Naive thymus-derived CD4-positive, alpha-beta T cell (primary cell): ENCODE measurements at regions of chr9 and their contacts with region 1.

Region 1: DNA sequence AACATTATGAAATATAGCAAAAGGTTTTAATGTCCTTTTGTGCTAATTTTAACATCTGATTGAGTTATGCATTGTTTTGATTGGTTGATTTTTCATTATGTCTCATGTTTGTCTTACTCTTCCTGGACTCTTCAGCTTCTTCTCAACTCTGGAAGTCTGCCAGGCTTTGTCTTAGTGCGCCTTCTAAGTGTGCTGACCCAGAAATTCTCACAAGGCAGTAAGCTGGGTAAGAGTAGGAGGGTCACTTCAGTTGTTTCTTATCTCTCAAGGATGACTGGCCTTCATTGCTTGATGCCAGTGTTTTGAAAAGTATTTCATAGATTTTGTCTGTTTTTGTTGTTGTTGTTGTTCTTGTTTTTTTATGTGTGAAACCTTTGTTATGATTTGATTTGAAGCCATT is 59.2 kb downstream of the RIC1 start:
- DNase-seq: no peak
- ATAC-seq: no peak
- H3K4me3 ChIP-seq: no peak overlapping the region
- H3K4me3 Mint-ChIP-seq: peak overlapping the region in 1 of 10 donors; percentile 7
- H3K27ac ChIP-seq: no peak overlapping the region
- H3K27ac Mint-ChIP-seq: peak overlapping the region in 2 of 9 donors; percentile 3 to 50
- H3K4me1 ChIP-seq: no peaks in the 10 kb centered on the region
- H3K4me1 Mint-ChIP-seq: peaks cover 0 to 30% (median 24%) of the 10 kb centered on the region in 7 donors
- H3K27me3 ChIP-seq: no peaks in the 10 kb centered on the region
- H3K27me3 Mint-ChIP-seq: no peaks in the 10 kb centered on the region

Region 2: GRCh38 chr9:5671711-5672353 is 16.3 kb before region 1 on chr9:
- CTCF ChIA-PET with region 1: no interaction called
- POLR2A ChIA-PET with region 1: no interaction called
- intact Hi-C with region 1: loop called in 1 of 2 experiments (anchors 2 kb)
- DNase-seq: peak in 7 of 9 donors; percentile 45 to 65 (median 52)
- ATAC-seq: peak; percentile 85
- H3K4me3 ChIP-seq: no peak overlapping the region
- H3K4me3 Mint-ChIP-seq: peak overlapping the region; percentile 3 to 62 (median 33)
- H3K27ac ChIP-seq: peak overlapping the region; percentile 1
- H3K27ac Mint-ChIP-seq: peak overlapping the region; percentile 3 to 87 (median 17)
- H3K4me1 ChIP-seq: peaks cover 5 to 19% of the 10 kb centered on the region in 2 donors
- H3K4me1 Mint-ChIP-seq: peaks cover 29 to 64% (median 57%) of the 10 kb centered on the region in 7 donors
- H3K27me3 ChIP-seq: no peaks in the 10 kb centered on the region
- H3K27me3 Mint-ChIP-seq: no peaks in the 10 kb centered on the region

Region 3: DNA sequence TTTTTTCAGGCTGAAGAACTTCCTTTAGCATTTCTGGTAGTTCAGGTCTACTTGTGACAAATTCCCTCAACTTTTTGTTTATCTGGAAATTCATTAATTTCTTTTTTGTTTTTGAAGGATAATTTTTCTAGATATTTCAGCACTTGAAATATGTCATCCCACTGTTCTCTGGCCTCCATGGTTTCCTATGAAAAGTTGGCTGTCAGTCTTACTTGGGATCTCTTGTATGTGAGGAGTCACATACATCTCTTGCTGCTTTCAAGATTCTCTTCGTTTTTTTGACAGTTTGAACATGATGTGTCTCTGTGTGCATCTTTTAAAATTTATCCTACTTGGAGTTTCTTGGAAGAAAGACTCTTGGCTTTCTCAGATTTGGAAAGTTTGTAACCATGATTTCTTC is 20.3 kb after region 1 on chr9:
- CTCF ChIA-PET with region 1: no interaction called
- POLR2A ChIA-PET with region 1: no interaction called
- intact Hi-C with region 1: loop called in 1 of 2 experiments (anchors 2 kb)
- DNase-seq: no peak
- ATAC-seq: no peak
- H3K4me3 ChIP-seq: no peak overlapping the region
- H3K4me3 Mint-ChIP-seq: no peak overlapping the region
- H3K27ac ChIP-seq: no peak overlapping the region
- H3K27ac Mint-ChIP-seq: no peak overlapping the region
- H3K4me1 ChIP-seq: no peaks in the 10 kb centered on the region
- H3K4me1 Mint-ChIP-seq: peaks cover 0 to 10% (median 2%) of the 10 kb centered on the region in 7 donors
- H3K27me3 ChIP-seq: no peaks in the 10 kb centered on the region
- H3K27me3 Mint-ChIP-seq: no peaks in the 10 kb centered on the region

Region 4: GRCh38 chr9:5817869-5818268 is 129.8 kb after region 1 on chr9:
- CTCF ChIA-PET with region 1: no interaction called
- POLR2A ChIA-PET with region 1: no interaction called
- intact Hi-C with region 1: no loop called
- DNase-seq: no peak
- ATAC-seq: no peak
- H3K4me3 ChIP-seq: no peak overlapping the region
- H3K4me3 Mint-ChIP-seq: no peak overlapping the region
- H3K27ac ChIP-seq: no peak overlapping the region
- H3K27ac Mint-ChIP-seq: no peak overlapping the region
- H3K4me1 ChIP-seq: no peaks in the 10 kb centered on the region
- H3K4me1 Mint-ChIP-seq: peaks cover 6 to 18% (median 15%) of the 10 kb centered on the region in 7 donors
- H3K27me3 ChIP-seq: no peaks in the 10 kb centered on the region
- H3K27me3 Mint-ChIP-seq: no peaks in the 10 kb centered on the region

Region 5: DNA sequence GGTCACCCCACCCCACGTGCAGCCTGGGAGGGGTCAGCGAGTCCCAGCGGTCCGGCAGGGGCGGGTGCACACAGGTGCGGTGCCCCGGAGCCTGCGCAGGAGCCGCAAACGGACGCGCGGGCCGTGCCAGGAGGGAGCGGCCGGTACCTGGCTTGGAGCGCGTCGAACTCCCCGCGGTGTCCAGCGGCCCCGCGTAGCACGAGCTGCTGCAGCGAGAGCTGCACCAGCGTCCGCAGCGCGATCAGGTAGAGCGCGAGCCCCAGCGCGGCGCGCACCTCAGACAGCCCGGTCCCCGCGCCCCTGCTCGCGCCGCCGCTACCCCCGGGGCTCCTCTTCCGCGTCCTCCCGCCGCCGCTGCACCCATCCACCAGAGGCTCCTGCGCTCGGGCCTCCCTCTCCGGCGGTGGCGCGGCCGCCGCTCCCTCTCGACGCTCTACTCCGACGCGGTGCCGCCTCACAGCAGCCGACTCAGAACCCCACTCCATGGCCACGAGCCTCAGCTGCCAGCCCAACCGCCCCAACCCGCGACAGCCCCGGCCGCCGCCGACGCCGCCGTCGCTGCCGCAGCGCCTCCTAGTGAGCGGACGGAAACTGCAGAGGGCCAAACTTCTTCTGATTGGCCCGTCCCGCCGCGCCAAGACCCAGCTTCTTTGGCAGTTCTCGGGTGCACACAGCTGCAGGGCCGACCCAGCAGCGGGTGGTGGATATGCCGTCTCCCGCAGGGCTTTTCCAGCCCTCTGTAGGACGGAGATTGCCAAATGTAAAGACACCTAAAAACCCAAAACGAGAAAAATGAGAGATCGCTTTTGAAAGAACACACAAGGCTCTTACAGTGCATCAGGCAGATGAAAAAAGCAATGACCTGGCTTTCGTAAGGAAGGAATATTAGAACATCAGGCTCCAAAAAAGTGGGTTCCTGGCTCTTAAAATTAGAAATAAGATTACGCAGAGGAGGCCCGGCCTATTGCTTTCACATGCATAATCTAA is 144.7 kb after region 1 on chr9 and contains the start of gene ERMP1:
- CTCF ChIA-PET with region 1: no interaction called
- POLR2A ChIA-PET with region 1: no interaction called
- intact Hi-C with region 1: no loop called
- DNase-seq: peak; percentile 83 to 94 (median 91)
- ATAC-seq: peak; percentile 95
- H3K4me3 ChIP-seq: peak within 1 kb of the TSS; percentile 85
- H3K4me3 Mint-ChIP-seq: peak within 1 kb of the TSS; percentile 91 to 99 (median 95)
- H3K27ac ChIP-seq: peak within 1 kb of the TSS; percentile 60
- H3K27ac Mint-ChIP-seq: peak within 1 kb of the TSS; percentile 79 to 96 (median 89)
- H3K4me1 ChIP-seq: peaks cover 25 to 33% of the 10 kb centered on the region in 2 donors
- H3K4me1 Mint-ChIP-seq: peaks cover 28 to 71% (median 60%) of the 10 kb centered on the region in 7 donors
- H3K27me3 ChIP-seq: no peaks in the 10 kb centered on the region
- H3K27me3 Mint-ChIP-seq: no peaks in the 10 kb centered on the region
- total RNA-seq, gene ERMP1: 9.5 to 37.1 (median 20.0) TPM

Region 6: GRCh38 chr9:6197330-6197729 is 509.2 kb after region 1 on chr9:
- CTCF ChIA-PET with region 1: no interaction called
- POLR2A ChIA-PET with region 1: no interaction called
- intact Hi-C with region 1: no loop called
- DNase-seq: no peak
- ATAC-seq: no peak
- H3K4me3 ChIP-seq: no peak overlapping the region
- H3K4me3 Mint-ChIP-seq: no peak overlapping the region
- H3K27ac ChIP-seq: no peak overlapping the region
- H3K27ac Mint-ChIP-seq: no peak overlapping the region
- H3K4me1 ChIP-seq: no peaks in the 10 kb centered on the region
- H3K4me1 Mint-ChIP-seq: no peaks in the 10 kb centered on the region
- H3K27me3 ChIP-seq: no peaks in the 10 kb centered on the region
- H3K27me3 Mint-ChIP-seq: peaks cover 15 to 44% (median 32%) of the 10 kb centered on the region in 5 donors